ENCODE measurements at regions of chr3 and their contacts with region 1.

Region 1: GRCh38 chr3:194315088-194315964 is 35.8 kb downstream of the CPN2 start:
- DNase-seq: peak; percentile 91
- ATAC-seq: peak; percentile 90

Region 2: GRCh38 chr3:193780810-193781472 is 534.4 kb before region 1 on chr3:
- intact Hi-C with region 1: loop called (anchors 2 kb)
- DNase-seq: peak; percentile 81
- ATAC-seq: peak; percentile 95

Region 3: DNA sequence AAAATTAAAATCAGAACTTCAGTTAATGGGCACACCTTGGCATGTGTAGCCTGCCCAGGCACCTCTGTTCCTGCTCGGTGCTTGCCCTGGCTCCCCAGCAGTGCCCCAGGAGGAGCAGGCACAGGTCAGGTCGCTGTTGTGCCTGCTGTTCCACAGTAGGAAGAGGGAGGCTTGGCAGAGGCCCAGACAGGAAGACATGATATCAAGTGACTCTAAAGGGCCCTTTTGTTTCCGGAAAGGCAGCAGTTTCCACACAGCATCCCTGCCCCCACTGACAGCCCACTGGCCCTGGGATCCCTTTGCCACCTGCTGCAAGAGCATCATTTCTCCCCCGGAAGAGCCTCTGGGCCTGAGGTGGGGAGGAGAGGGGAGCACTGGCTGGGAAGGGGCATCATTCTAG is 219.9 kb before region 1 on chr3:
- intact Hi-C with region 1: no loop called
- DNase-seq: peak; percentile 63
- ATAC-seq: no peak

Region 4: GRCh38 chr3:194141415-194142155 is 173.7 kb before region 1 on chr3:
- intact Hi-C with region 1: loop called (anchors 5 kb)
- DNase-seq: peak; percentile 95
- ATAC-seq: peak; percentile 86

Region 5: GRCh38 chr3:194158922-194159439 is 156.3 kb before region 1 on chr3:
- intact Hi-C with region 1: loop called (anchors 5 kb)
- DNase-seq: no peak
- ATAC-seq: no peak

Region 6: DNA sequence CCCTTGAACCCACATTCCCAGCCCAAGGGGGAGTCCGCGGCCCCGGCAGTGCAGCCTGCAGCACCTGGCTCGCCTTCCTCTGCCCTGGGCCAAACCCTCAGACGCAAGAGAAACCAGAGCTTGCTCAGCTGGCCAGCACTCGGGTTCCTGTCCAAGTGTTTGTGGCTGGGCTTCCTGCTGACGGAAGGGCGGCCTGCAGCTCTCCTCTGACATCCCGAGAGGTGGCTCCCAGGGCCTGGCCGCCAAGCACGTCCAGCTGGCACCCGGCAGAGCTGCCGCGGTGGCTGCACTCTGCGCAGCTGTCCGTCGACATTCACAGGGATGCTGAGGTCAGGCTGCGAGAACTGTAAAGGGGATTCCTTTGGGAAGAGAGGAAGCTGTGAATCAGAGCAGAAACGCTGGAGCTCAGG is 49.8 kb before region 1 on chr3:
- intact Hi-C with region 1: loop called (anchors 5 kb)
- DNase-seq: peak; percentile 95
- ATAC-seq: peak; percentile 85